ENCODE measurements at regions of chr4 and their contacts with region 1.

Region 1: DNA sequence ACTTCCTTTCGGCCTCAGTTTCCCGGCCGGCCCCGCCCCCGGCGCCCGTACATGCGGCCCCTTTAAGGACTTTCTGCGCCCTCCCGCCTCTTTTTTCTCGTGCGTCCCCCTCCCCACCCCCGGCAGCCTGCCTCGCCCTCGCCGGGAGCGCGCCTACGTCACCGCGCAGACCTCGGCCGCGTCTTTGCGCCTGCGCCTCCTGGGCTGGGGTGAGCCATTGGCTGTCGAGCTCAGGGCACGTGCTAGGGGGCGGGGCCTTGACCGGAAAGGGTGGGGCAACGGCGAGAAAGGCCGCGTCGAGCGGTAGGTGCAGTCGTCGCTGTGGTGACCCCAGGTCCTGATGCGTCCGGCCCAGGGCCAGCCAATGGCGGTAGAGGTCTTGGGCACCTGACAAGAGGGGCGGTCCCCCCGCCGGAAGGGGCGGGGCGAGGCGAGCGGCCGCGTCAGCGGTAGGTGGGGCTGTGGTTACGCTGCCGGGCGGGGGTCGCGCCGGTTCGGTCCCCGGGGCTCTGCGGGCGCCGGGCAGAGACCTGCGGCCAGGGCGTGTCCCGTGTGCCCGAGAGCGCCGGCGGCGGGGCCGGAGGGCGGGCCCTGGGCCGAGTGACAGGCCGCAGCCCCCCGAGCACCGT is at the start of gene UVSSA:
- DNase-seq: peak; percentile 100
- H3K4me3 ChIP-seq: peak within 1 kb of the TSS; percentile 36 to 81
- H3K4me3 Mint-ChIP-seq: peak within 1 kb of the TSS; percentile 91 to 98 (median 95)
- H3K27ac ChIP-seq: peak within 1 kb of the TSS; percentile 83
- H3K27ac Mint-ChIP-seq: peak within 1 kb of the TSS; percentile 91 to 98 (median 95)
- H3K4me1 ChIP-seq: peaks cover 34% of the 10 kb centered on the region
- H3K4me1 Mint-ChIP-seq: peaks cover 25 to 60% (median 29%) of the 10 kb centered on the region in 4 donors
- H3K27me3 ChIP-seq: no peaks in the 10 kb centered on the region
- H3K27me3 Mint-ChIP-seq: no peaks in the 10 kb centered on the region
- total RNA-seq, gene UVSSA: 44.4 to 44.6 TPM

Region 2: DNA sequence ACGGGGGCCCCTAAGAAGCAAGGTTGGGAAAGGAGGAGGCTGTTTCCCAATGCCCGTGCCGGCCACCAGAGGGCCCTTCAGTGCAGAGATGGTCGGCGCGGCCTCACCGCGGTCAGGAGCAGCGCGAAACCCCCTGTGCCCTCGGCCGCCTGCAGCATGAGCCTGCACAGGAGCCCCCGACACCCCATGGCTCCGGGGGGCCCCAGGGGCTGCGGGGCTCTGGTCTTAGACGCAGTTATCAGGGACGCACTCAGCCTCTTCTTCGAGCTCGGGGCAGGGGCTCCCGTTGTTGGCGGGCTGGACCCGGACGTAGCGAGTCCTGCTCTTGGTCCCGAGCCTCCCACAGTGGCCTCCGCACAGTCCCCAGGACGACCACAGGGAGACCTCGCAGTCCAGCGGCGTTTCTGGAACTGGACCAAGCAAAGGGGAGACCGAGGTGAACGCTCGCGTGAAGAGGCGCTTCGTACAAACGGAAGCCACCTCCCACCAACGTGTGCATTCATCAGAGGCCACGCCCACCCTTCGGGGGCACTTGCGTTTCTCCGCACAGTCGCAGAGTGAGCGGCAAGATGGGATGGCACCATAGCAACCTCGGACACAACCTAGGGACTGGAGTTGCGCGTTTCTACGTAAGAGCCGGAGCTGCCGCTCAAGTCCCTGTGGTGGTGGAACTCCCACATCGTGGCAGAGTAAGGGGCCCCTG is 179.5 kb before region 1 on chr4:
- CTCF ChIA-PET with region 1: interaction called, 9 read pairs
- POLR2A ChIA-PET with region 1: interaction called, 7 read pairs
- intact Hi-C with region 1: loop called (anchors 1 kb)
- DNase-seq: peak; percentile 81 to 91 (median 84)
- H3K4me3 ChIP-seq: peak overlapping the region; percentile 47 to 78
- H3K4me3 Mint-ChIP-seq: peak overlapping the region; percentile 83 to 90 (median 87)
- H3K27ac ChIP-seq: peak overlapping the region; percentile 72
- H3K27ac Mint-ChIP-seq: peak overlapping the region; percentile 51 to 92 (median 87)
- H3K4me1 ChIP-seq: peaks cover 25% of the 10 kb centered on the region
- H3K4me1 Mint-ChIP-seq: peaks cover 9 to 24% (median 16%) of the 10 kb centered on the region in 4 donors
- H3K27me3 ChIP-seq: peaks cover 9% of the 10 kb centered on the region
- H3K27me3 Mint-ChIP-seq: peaks cover 0 to 5% of the 10 kb centered on the region in 2 donors

Region 3: DNA sequence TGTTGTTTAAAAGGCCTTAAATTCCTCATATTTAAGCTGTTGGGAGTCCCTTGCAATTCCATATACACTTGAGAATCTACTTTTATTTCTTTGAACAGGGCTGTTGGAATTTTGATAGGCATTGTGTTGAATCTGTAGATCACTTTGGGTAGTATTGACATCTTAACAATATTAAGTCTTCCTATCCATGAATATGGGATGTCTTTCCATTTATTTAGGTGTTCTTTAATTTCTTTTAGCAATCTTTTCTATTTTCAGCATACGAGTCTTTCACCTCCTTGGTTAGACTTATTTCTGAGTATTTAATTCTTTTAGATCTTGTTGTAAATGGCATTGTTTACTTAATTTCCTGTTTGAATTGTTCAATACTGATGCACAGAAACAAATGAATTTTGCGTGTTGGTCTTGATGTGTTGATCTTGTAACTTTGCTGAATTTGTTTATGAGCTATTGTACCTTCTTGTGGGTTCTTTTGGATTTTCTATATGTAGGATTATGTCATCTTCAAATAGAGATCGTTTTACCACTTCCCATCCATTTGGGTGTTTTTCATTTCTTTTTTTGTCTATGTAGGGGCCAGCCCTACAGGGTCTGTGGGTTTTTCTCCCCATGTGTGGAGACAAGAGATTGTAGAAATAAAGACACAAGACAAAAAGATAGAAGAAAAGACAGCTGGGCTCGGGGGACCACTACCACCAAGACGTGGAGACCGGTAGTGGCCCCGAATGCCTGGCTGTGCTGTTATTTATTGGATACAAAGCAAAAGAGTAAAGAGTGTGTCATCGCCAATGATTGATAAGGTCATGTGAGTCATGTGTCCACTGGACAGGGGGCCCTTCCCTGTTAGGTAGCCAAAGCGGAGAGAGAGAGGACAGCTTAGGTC is 79.8 kb before region 1 on chr4:
- CTCF ChIA-PET with region 1: interaction called, 28 read pairs
- POLR2A ChIA-PET with region 1: interaction called, 25 read pairs
- intact Hi-C with region 1: loop called (anchors 5 kb)
- DNase-seq: peak in 2 of 5 donors; percentile 25 to 36
- H3K4me3 ChIP-seq: peak overlapping the region in 1 of 2 donors; percentile 62
- H3K4me3 Mint-ChIP-seq: peak overlapping the region; percentile 75 to 90 (median 88)
- H3K27ac ChIP-seq: peak overlapping the region; percentile 63
- H3K27ac Mint-ChIP-seq: peak overlapping the region; percentile 94 to 100 (median 95)
- H3K4me1 ChIP-seq: peaks cover 12% of the 10 kb centered on the region
- H3K4me1 Mint-ChIP-seq: peaks cover 9 to 19% (median 12%) of the 10 kb centered on the region in 4 donors
- H3K27me3 ChIP-seq: no peaks in the 10 kb centered on the region
- H3K27me3 Mint-ChIP-seq: no peaks in the 10 kb centered on the region

Region 4: GRCh38 chr4:1318488-1319213 is 28.2 kb before region 1 on chr4:
- CTCF ChIA-PET with region 1: interaction called, 14 read pairs
- POLR2A ChIA-PET with region 1: interaction called, 11 read pairs
- intact Hi-C with region 1: loop called (anchors 1 kb)
- DNase-seq: peak in 1 of 5 donors; percentile 28
- H3K4me3 ChIP-seq: no peak overlapping the region
- H3K4me3 Mint-ChIP-seq: no peak overlapping the region
- H3K27ac ChIP-seq: no peak overlapping the region
- H3K27ac Mint-ChIP-seq: peak overlapping the region in 6 of 7 donors; percentile 35 to 77 (median 50)
- H3K4me1 ChIP-seq: peaks cover 9% of the 10 kb centered on the region
- H3K4me1 Mint-ChIP-seq: peaks cover 14 to 21% (median 19%) of the 10 kb centered on the region in 4 donors
- H3K27me3 ChIP-seq: no peaks in the 10 kb centered on the region
- H3K27me3 Mint-ChIP-seq: no peaks in the 10 kb centered on the region

Region 5: GRCh38 chr4:1712216-1713002 is 365.5 kb after region 1 on chr4 and contains the start of gene SLBP:
- CTCF ChIA-PET with region 1: no interaction called
- POLR2A ChIA-PET with region 1: interaction called, 8 read pairs
- intact Hi-C with region 1: loop called (anchors 5 kb)
- DNase-seq: peak; percentile 98 to 99 (median 99)
- H3K4me3 ChIP-seq: peak within 1 kb of the TSS; percentile 62 to 99
- H3K4me3 Mint-ChIP-seq: peak within 1 kb of the TSS; percentile 95 to 99 (median 98)
- H3K27ac ChIP-seq: peak within 1 kb of the TSS; percentile 92
- H3K27ac Mint-ChIP-seq: peak within 1 kb of the TSS; percentile 95 to 98 (median 97)
- H3K4me1 ChIP-seq: peaks cover 67% of the 10 kb centered on the region
- H3K4me1 Mint-ChIP-seq: peaks cover 31 to 74% (median 53%) of the 10 kb centered on the region in 4 donors
- H3K27me3 ChIP-seq: no peaks in the 10 kb centered on the region
- H3K27me3 Mint-ChIP-seq: no peaks in the 10 kb centered on the region
- total RNA-seq, gene SLBP: 41.8 to 47.4 TPM

Measured in CD4-positive, alpha-beta memory T cell (primary cell).